Left cardiac atrium (tissue), 4 donors: ENCODE measurements at regions of chr19 and their contacts with region 1.

Region 1: DNA sequence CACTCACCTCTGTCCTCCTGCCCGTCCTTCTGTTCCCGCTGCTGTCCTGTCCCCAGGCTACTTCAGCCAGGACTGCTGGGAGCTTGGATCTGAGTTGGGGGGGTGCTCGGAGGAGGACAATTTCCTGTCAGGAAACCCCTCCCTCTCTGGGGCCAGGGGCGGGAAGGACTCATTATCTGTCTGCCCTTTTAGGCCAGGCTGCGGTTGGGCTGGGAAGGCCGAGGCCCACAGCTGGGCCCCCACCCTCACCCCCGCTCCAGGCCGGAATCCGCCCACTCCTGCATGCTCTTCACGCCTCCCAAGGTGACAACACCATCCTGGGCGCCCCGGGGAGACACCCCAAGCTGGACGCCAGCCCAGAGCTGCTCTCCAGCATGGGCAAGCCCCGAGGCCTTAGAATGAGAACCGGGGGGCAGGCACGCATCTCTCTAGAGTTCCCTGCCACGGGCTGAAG is at the start of gene EXOC3L2:
- DNase-seq: peak; percentile 73
- ATAC-seq: peak; percentile 25 to 70
- total RNA-seq, gene EXOC3L2: 1.9 to 2.6 TPM

Region 2: DNA sequence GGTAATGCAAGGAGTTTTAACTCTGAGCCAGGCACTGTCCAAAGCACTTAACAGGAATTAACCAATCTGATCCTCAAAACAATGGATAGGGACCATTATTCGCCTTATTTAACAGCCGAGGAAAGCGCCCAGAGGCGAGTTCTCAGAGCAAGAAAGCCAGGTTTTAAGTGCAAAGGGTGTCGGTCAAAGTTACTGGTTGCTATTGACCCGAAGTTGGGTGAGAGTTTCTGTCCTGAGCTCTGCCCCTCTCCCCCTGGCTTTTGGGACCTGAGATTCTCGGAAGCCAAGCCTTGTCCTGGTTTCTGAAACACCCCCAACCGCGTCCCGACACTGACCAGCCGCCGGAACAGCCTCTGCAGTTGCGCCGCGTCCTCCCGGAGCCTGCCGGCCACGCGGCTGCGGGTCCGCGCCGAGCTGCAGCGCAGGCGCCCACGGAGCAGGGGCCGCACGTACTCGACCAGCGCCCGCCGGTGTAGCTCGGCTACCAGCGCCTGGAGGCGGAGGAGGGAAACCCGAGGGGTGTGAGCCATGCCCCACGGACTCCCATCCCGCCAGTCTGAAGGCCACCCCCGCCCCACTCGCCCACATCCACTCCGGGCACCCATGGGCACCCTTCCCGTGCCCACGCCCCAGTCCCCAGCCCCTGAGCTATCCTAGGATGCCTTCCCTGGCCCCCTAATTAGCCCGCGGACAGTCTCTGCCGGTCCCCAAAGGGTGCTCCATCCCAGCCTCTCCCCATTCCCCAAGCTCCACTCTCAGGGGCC is 28.0 kb before region 1 on chr19:
- intact Hi-C with region 1: no loop called
- DNase-seq: no peak
- ATAC-seq: peak in 1 of 2 donors; percentile 49

Region 3: DNA sequence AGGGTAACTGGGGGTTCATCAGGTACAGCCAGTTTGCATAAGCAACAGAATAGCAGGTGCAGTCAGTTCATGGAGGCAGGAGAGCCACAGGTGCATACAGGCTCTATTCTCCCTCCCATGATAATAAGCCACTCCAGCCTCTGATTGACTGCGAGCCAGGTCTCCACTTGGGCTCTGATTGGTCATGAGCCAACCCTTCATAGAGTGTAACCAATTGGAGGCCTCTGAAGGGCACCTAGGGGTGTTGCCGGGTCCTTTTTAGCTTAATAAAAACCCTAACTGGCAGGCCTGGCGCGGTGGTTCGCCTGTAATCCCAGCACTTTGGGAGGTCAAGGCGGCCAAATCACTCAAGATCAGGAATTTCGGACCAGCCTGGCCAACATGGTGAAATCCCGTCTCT is 86.1 kb after region 1 on chr19:
- intact Hi-C with region 1: loop called in 1 of 2 experiments (anchors 10 kb)
- DNase-seq: no peak
- ATAC-seq: no peak